ENCODE measurements at regions of chr17 and their contacts with region 1.

Region 1: DNA sequence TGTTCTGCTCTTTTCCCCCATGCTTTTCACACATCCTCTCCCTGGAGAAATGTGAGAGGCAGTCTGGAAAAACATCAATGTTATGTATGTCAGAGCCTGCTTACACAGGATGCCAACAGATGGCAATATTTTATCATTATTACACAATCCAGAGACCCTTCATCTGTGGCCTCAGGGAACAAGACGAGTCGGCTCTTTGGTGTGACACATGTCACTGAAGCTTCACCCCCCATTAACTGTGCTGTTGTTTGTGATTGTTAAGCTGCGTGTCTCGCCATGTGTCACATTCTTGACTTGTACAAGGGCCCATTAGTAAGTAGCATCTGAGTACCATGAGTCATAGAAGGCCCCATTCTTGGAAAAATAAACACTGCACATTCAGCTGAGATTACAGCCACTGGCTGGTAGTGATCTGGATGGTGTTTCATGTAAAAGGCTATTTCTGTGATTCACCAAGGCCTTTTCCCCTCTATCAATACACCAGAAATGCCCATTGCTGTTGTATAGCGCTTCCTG is 682.1 kb upstream of the SOX9 start:
- DNase-seq: peak; percentile 70
- H3K4me3 ChIP-seq: no peak overlapping the region
- CTCF ChIP-seq: no peak

Region 2: DNA sequence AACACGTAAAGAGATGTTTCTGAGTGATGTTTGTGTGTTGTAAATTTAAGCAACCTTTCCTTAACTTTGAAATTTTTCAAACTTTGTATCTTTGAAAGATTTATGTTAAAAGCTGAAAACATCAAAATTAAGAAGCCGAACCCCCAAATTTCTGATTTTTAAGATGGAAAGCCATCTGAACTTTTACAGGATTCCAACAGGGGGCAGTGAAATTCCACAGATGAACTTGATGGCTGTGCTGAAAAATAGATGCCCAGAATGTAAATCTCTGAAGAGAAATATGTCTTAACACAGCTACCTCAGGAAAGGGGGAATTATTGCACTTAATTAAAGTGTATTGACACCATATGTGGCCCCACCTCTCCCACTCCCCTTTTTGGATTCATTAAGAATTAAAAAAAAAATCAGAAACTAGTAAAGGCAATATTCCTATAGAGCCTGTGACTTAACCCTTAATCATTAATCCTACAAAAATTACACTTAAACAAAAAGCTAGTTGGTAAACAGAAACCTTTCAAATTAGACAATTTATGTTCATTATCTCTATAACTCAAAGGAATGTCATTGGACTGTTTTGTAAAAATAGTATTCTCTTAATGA is 671.5 kb before region 1 on chr17:
- in situ Hi-C with region 1: loop called (anchors 25 kb)
- DNase-seq: peak; percentile 32
- H3K4me3 ChIP-seq: no peak overlapping the region
- CTCF ChIP-seq: peak; percentile 75

Region 3: GRCh38 chr17:71472809-71473789 is 34.4 kb after region 1 on chr17:
- in situ Hi-C with region 1: no loop called
- DNase-seq: peak; percentile 49
- H3K4me3 ChIP-seq: no peak overlapping the region
- CTCF ChIP-seq: peak; percentile 78